ENCODE measurements at regions of chr11 and their contacts with region 1.

Region 1: DNA sequence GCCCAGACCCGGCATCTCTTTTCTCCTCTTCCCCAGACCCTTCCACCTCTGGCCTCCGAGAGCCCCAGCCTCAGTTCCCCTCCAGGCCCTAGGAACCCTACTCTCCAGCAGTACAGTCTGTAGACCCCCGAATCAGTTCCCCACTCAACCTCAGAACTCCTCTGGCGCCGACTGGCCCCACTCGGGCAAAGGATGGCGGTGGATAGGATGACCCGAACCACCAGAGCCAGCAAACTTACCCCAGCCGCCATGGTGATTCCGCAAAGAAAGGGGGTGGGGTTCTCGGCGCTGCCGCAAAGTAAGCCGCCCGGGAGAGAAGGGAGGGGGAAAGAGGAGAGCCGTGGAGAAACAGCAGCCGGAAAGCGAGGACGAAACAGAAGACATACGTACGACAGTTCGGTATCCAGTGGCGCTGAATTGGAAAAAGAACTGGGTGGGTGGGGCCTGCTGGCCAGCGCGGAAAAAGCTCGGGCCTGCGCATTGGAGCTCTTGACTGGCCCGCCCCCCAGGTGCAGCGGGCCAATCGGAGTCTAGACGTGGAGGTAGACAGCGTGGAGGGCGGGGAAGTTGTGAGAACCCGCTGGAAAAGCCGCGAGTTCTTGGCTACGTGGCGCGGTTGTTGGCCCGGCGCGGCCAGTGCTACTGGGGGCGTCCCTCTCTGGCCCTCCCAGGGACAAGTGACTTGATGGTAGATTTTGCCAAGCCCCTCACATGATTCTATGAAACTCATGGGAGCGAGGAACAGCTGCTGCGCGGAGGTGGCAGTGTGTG is at the start of gene EEF1G:
- DNase-seq: peak; percentile 100
- H3K4me3 ChIP-seq: peak within 1 kb of the TSS; percentile 62
- H3K4me3 Mint-ChIP-seq: peak within 1 kb of the TSS; percentile 97
- H3K27ac Mint-ChIP-seq: peak within 1 kb of the TSS; percentile 100
- H3K4me1 ChIP-seq: peaks cover 25% of the 10 kb centered on the region
- H3K4me1 Mint-ChIP-seq: peaks cover 56% of the 10 kb centered on the region
- H3K27me3 ChIP-seq: no peaks in the 10 kb centered on the region
- H3K27me3 Mint-ChIP-seq: no peaks in the 10 kb centered on the region
- CTCF ChIP-seq: no peak
- total RNA-seq, gene EEF1G: 2,004 and 2,035 TPM in 2 replicates

Region 2: DNA sequence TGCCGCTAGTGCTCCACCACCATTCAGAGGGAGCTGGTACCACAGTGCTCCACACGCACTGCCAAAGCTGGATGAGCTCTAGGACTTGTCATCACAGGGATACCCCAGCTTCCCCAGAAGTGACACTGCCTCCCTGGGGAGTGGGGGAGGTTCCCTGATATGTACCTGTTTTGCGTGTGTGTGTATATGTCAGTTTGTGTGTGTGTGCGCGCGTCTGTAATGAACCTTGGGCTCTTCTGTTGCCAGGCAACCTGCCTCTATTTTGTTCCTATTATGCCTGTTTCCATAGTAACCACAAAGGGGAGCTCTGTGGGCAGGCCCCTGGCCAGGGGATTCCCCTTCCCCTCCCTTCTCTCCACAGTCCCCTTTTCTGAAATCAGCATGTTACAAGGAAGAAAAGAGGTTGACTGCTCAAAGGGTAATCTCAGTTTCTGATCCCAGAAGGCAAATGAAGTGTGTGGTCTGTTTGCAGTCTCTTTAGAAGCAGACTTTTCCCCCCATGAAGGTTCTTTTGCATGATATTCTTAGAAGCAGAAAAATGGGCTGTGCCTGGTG is 22.0 kb before region 1 on chr11:
- CTCF ChIA-PET with region 1: interaction called, 7 read pairs
- POLR2A ChIA-PET with region 1: interaction called, 34 read pairs
- intact Hi-C with region 1: no loop called
- DNase-seq: peak; percentile 74 to 77
- H3K4me3 ChIP-seq: no peak overlapping the region
- H3K4me3 Mint-ChIP-seq: peak overlapping the region; percentile 71
- H3K27ac Mint-ChIP-seq: peak overlapping the region; percentile 96
- H3K4me1 ChIP-seq: peaks cover 87% of the 10 kb centered on the region
- H3K4me1 Mint-ChIP-seq: peaks cover 61% of the 10 kb centered on the region
- H3K27me3 ChIP-seq: no peaks in the 10 kb centered on the region
- H3K27me3 Mint-ChIP-seq: no peaks in the 10 kb centered on the region
- CTCF ChIP-seq: no peak

Region 3: DNA sequence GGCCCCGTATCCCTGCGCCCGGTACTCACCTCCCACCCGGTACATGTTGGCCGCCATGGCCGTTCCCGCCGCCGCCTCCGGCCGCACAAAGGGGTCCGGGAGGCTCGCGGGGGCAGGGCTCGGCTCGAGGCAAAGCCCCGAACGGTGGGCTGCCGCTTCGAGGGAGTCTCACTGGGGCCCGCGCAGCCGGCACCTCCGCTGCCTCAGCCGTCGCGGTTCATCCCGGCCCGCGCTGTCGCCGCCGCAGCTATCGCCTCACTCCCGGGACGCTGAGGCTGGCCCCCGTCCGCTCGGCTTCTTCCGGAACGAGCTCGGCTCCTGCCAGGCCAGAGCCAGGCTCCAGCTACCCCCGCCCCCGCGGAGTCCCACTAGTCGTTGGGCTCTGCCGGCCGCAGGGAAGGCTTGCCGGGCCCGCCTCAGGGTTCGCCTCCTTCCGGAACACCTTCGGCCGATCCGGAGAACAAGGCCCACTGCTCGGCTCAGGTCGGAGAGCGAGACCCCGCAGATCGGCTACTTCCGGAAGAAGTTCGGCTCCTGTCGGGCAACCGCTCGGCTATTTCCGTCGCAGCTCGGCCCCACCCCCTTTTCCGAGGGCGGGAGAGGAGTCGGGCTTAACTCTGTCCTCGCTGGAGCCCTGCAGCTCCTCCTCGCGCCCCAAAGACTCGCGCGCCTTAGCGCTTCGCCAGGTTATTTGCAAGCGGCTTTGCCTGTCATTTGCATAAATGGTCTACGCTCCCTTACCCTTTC is 27.8 kb after region 1 on chr11 and contains the start of gene MTA2:
- CTCF ChIA-PET with region 1: interaction called, 4 read pairs
- POLR2A ChIA-PET with region 1: interaction called, 25 read pairs
- intact Hi-C with region 1: no loop called
- DNase-seq: peak; percentile 99 to 100
- H3K4me3 ChIP-seq: peak within 1 kb of the TSS; percentile 97
- H3K4me3 Mint-ChIP-seq: peak within 1 kb of the TSS; percentile 88
- H3K27ac Mint-ChIP-seq: peak within 1 kb of the TSS; percentile 89
- H3K4me1 ChIP-seq: peaks cover 35% of the 10 kb centered on the region
- H3K4me1 Mint-ChIP-seq: peaks cover 36% of the 10 kb centered on the region
- H3K27me3 ChIP-seq: no peaks in the 10 kb centered on the region
- H3K27me3 Mint-ChIP-seq: no peaks in the 10 kb centered on the region
- CTCF ChIP-seq: no peak
- total RNA-seq, gene MTA2: 134 and 135 TPM in 2 replicates

Measured in Caco-2 (cell line).